ENCODE measurements at regions of chr1 and their contacts with region 1.

Region 1: DNA sequence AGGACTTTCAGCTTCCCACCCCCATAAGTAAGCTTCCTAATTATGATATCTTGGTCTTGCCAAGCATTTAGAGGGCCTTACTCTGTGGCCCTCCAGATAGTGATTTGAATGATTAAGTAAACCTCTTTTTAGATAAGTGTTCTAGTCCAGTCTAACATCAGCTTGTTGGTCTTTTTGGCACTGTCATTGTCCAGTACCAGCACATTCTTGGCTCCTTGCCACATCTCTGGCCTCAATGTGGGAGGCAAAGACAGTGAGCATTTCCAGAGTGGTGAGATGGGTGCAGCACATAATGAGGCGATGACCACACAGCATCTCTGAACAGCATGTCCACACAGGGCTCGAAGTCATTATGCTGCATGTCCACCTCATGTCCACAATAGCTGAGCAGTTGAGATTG is 6.1 kb downstream of the CAPZA1 start:
- DNase-seq: no peak
- ATAC-seq: peak; percentile 25
- H3K4me3 ChIP-seq: no peak overlapping the region
- H3K4me3 Mint-ChIP-seq: peak overlapping the region in 5 of 10 donors; percentile 2 to 69 (median 36)
- H3K27ac ChIP-seq: peak overlapping the region; percentile 50
- H3K27ac Mint-ChIP-seq: peak overlapping the region in 6 of 9 donors; percentile 43 to 90 (median 64)
- H3K4me1 ChIP-seq: peaks cover 39 to 41% of the 10 kb centered on the region in 2 donors
- H3K4me1 Mint-ChIP-seq: peaks cover 54 to 88% (median 80%) of the 10 kb centered on the region in 7 donors
- H3K27me3 ChIP-seq: no peaks in the 10 kb centered on the region
- H3K27me3 Mint-ChIP-seq: no peaks in the 10 kb centered on the region

Region 2: GRCh38 chr1:112263453-112263852 is 362.2 kb before region 1 on chr1:
- CTCF ChIA-PET with region 1: no interaction called
- POLR2A ChIA-PET with region 1: no interaction called
- intact Hi-C with region 1: no loop called
- DNase-seq: no peak
- ATAC-seq: no peak
- H3K4me3 ChIP-seq: no peak overlapping the region
- H3K4me3 Mint-ChIP-seq: no peak overlapping the region
- H3K27ac ChIP-seq: no peak overlapping the region
- H3K27ac Mint-ChIP-seq: no peak overlapping the region
- H3K4me1 ChIP-seq: no peaks in the 10 kb centered on the region
- H3K4me1 Mint-ChIP-seq: no peaks in the 10 kb centered on the region
- H3K27me3 ChIP-seq: no peaks in the 10 kb centered on the region
- H3K27me3 Mint-ChIP-seq: peaks cover 10 to 34% (median 22%) of the 10 kb centered on the region in 5 donors

Region 3: DNA sequence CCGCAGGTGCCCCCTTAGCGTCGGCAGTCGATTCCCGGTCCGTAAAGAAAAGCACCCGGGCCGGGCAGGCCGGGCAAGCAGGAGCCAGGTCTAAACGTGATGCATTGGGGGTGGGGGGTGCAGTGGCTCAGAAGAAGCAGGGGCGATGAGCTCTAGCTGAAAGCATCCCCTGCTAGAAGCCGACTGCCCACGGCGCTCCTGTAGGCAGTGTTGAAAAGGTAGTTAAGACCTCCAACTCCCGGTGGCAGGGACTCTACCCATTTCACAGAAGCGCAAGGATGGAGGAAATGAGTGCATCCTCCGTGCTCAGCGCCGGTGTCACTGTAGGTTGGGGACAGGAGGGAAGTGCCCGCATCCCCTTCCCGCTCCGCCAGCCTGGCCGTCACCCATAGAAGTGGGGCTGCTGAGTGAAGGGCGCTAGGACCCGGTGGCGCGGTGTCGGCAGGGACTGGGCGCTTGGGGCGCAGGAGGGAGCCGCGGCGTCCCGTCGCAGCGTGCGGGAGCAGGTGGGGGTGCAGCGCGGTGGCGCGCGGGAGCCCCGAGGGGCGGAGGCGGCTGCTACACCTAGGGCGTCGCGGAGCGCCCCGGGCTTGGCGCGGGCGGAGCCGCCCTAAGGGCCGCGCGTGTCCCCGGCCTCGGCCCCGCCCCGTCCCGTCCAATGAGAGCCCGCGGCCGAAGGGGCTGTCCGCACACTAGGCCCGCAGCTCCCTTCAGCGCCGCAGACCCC is 117.3 kb before region 1 on chr1 and contains the start of gene WNT2B:
- CTCF ChIA-PET with region 1: no interaction called
- POLR2A ChIA-PET with region 1: no interaction called
- intact Hi-C with region 1: no loop called
- DNase-seq: peak; percentile 37 to 60 (median 52)
- ATAC-seq: peak; percentile 85
- H3K4me3 ChIP-seq: peak within 1 kb of the TSS; percentile 57
- H3K4me3 Mint-ChIP-seq: peak within 1 kb of the TSS; percentile 74 to 90 (median 82)
- H3K27ac ChIP-seq: no peak within 1 kb of the TSS
- H3K27ac Mint-ChIP-seq: peak within 1 kb of the TSS in 1 of 9 donors; percentile 25
- H3K4me1 ChIP-seq: peaks cover 10 to 12% of the 10 kb centered on the region in 2 donors
- H3K4me1 Mint-ChIP-seq: peaks cover 3 to 16% (median 9%) of the 10 kb centered on the region in 7 donors
- H3K27me3 ChIP-seq: peaks cover 0 to under 1% of the 10 kb centered on the region in 2 donors
- H3K27me3 Mint-ChIP-seq: peaks cover 17 to 63% (median 23%) of the 10 kb centered on the region in 5 donors
- total RNA-seq, gene WNT2B: 0.38 to 0.94 (median 0.61) TPM in 4 of 5 experiments, not detected in the other

Region 4: GRCh38 chr1:112636597-112637253 is 11.0 kb after region 1 on chr1:
- CTCF ChIA-PET with region 1: no interaction called
- POLR2A ChIA-PET with region 1: interaction called, 3 read pairs
- intact Hi-C with region 1: loop called in 1 of 2 experiments (anchors 1 kb)
- DNase-seq: no peak
- ATAC-seq: peak; percentile 20
- H3K4me3 ChIP-seq: no peak overlapping the region
- H3K4me3 Mint-ChIP-seq: peak overlapping the region in 5 of 10 donors; percentile 12 to 48 (median 22)
- H3K27ac ChIP-seq: peak overlapping the region; percentile 38
- H3K27ac Mint-ChIP-seq: peak overlapping the region; percentile 31 to 84 (median 68)
- H3K4me1 ChIP-seq: peaks cover 13 to 34% of the 10 kb centered on the region in 2 donors
- H3K4me1 Mint-ChIP-seq: peaks cover 35 to 65% (median 59%) of the 10 kb centered on the region in 7 donors
- H3K27me3 ChIP-seq: no peaks in the 10 kb centered on the region
- H3K27me3 Mint-ChIP-seq: no peaks in the 10 kb centered on the region

Region 5: GRCh38 chr1:112646225-112646624 is 20.5 kb after region 1 on chr1:
- CTCF ChIA-PET with region 1: no interaction called
- POLR2A ChIA-PET with region 1: no interaction called
- intact Hi-C with region 1: loop called in 1 of 2 experiments (anchors 2 kb)
- DNase-seq: no peak
- ATAC-seq: no peak
- H3K4me3 ChIP-seq: no peak overlapping the region
- H3K4me3 Mint-ChIP-seq: no peak overlapping the region
- H3K27ac ChIP-seq: no peak overlapping the region
- H3K27ac Mint-ChIP-seq: peak overlapping the region in 7 of 9 donors; percentile 4 to 71 (median 36)
- H3K4me1 ChIP-seq: peaks cover 0 to 8% of the 10 kb centered on the region in 2 donors
- H3K4me1 Mint-ChIP-seq: peaks cover 15 to 65% (median 37%) of the 10 kb centered on the region in 7 donors
- H3K27me3 ChIP-seq: no peaks in the 10 kb centered on the region
- H3K27me3 Mint-ChIP-seq: no peaks in the 10 kb centered on the region

Measured in naive thymus-derived CD4-positive, alpha-beta T cell (primary cell).